A549 (cell line): ENCODE measurements at regions of chr17 and their contacts with region 1.

Region 1: DNA sequence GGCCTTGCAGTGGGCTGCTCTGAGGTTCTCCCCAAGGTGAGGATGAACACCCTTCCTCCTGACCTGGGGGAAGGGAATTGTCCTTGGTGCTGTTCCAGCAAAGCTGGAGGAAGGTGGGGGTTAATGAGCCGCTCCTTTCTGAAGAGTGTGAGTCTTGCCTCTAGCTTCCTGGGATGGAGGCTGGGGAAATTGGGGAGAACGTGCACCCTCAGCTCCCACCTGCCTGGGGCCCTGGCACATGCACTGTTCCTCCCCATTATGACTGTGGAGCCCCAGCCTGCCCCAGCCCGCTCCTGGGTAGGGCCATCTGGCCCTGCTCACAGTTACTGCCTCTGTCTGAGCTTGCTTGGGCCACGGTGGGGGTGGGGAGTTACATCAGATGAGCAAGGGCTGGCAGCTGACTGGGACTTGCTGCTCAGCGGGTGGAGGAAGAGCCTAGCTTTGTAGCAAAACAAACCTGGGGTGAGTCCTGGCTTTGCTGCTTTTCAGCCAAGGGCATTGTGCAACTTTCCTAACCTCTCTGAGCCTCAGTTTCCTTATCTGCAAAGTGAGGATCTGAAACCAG is 11.1 kb downstream of the TNS4 start:
- DNase-seq: peak in 1 of 2 experiments; percentile 76
- ATAC-seq: peak in 1 of 2 experiments; percentile 1; a peak in 2 of 6 replicates
- H3K4me3 ChIP-seq: no peak overlapping the region
- H3K27ac ChIP-seq: peak overlapping the region; percentile 96 to 97
- H3K4me1 ChIP-seq: peaks cover 98% of the 10 kb centered on the region
- CTCF ChIP-seq: no peak
- EP300 ChIP-seq: 0 out of 5 replicates have a peak, but pooled peaks have one; percentile 1 to 15
- POLR2A ChIP-seq: no peak
- RAD21 ChIP-seq: no peak

Region 2: GRCh38 chr17:40516581-40517285 is 26.4 kb after region 1 on chr17:
- CTCF ChIA-PET with region 1: interaction called, 8 read pairs
- POLR2A ChIA-PET with region 1: interaction called, 17 read pairs
- DNase-seq: peak; percentile 74 to 85
- ATAC-seq: peak in 1 of 2 experiments; percentile 1; a peak in 2 of 6 replicates
- H3K4me3 ChIP-seq: no peak overlapping the region
- H3K27ac ChIP-seq: peak overlapping the region; percentile 97 to 99
- H3K4me1 ChIP-seq: peaks cover 74% of the 10 kb centered on the region
- CTCF ChIP-seq: no peak
- EP300 ChIP-seq: peak; percentile 69 to 92; a peak in 3 of 5 replicates
- POLR2A ChIP-seq: no peak
- RAD21 ChIP-seq: peak in 1 of 2 experiments; percentile 18; a peak in 1 of 5 replicates

Region 3: GRCh38 chr17:40542558-40543411 is 52.4 kb after region 1 on chr17:
- CTCF ChIA-PET with region 1: interaction called, 379 read pairs
- POLR2A ChIA-PET with region 1: interaction called, 25 read pairs
- DNase-seq: peak; percentile 99 to 100
- ATAC-seq: peak; percentile 87 to 90
- H3K4me3 ChIP-seq: no peak overlapping the region
- H3K27ac ChIP-seq: peak overlapping the region; percentile 95 to 99
- H3K4me1 ChIP-seq: peaks cover 71% of the 10 kb centered on the region
- CTCF ChIP-seq: no peak
- EP300 ChIP-seq: peak; percentile 100
- POLR2A ChIP-seq: no peak
- RAD21 ChIP-seq: peak; percentile 4 to 55; a peak in 4 of 5 replicates

Region 4: DNA sequence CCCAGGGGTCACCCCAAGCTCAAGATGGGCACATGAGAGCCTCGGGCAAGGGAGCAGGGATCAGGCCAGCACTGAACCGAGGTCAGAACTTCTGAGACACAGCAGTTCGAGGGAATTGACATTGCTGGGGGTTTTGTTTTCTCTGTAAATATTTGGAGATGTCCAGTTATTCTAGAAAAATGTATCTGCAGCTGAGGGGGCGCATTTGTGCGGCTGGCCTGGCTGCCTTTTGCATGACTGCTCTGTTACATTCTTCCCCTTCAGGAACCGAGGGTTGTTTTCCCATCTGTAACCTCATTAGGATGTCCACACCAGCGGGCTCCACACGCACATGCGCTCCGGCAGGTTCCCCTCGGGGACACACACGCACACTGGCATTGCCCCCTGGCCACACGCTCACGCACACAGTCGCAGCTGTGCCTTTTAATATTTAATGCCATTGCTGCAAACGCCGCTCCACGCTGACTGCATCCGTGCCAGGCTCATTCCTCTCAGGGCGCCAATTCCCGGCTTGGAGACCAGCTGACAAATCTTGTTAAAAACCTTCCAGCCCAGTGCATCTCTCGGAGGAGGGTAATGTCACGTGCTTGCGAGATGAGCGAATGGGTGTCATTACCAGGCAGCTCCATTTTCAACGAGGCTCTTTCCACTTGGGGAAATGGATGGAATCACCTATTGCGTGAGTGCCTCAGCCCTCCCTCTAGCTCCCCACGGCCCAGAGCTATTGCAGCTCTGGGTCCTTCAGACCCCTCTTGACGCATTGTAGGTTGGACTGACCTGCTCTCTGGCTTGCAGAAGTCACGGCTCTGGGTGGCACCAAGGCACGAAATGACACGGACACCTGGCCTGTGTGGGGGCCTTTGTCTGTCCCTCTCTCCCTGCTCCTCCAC is 61.8 kb after region 1 on chr17:
- CTCF ChIA-PET with region 1: interaction called, 203 read pairs
- POLR2A ChIA-PET with region 1: interaction called, 38 read pairs
- DNase-seq: peak; percentile 95 to 99
- ATAC-seq: peak; percentile 51 to 75
- H3K4me3 ChIP-seq: peak overlapping the region; percentile 17; the same call in 2 of the 3 replicates
- H3K27ac ChIP-seq: peak overlapping the region; percentile 95 to 99
- H3K4me1 ChIP-seq: peaks cover 84% of the 10 kb centered on the region
- CTCF ChIP-seq: no peak
- EP300 ChIP-seq: peak; percentile 100
- POLR2A ChIP-seq: no peak
- RAD21 ChIP-seq: peak; percentile 43 to 62